ENCODE measurements at regions of chr22 and their contacts with region 1.

Region 1: DNA sequence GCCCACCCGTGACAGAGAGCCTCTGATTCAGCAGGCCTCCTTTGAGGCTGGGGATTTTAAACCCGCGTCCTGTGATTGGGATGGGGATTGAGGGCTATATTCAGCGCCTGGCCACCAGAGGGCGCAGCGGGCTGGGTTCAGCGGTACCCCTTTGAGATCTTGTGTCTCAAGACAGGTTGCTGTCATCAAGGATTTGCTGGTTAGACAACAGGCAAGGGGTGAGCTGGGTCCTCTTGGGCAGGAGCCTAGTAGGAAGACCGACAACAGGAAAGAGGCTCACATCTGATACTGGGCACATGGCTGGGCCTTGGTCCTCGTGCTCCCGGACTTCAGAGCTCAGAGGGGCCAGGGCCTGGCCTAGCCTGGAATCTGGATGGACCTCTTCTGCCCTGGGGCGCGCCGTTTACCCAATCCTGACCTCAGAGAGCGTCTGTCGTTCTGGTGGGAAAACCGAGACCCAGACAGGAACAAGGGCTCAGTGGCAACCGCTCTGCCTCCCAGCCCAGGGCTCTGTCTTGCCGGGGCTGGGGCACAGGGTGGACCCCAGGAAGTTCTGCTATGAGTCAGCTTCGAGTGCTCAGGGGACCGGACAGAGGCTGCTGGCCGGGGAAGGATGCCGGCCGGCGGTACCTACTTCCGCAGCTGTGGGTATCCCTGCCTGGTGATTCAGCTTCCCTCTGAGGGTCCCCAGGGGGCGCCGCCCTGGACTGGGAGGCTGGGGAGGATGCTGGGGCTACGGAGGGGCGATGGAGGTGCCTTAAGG is 929 bp upstream of the SLC35E4 start:
- DNase-seq: peak; percentile 95
- ATAC-seq: peak; percentile 77
- H3K4me3 Mint-ChIP-seq: peak overlapping the region; percentile 75
- H3K27ac Mint-ChIP-seq: peak overlapping the region; percentile 84
- H3K4me1 Mint-ChIP-seq: peaks cover 22% of the 10 kb centered on the region
- H3K27me3 Mint-ChIP-seq: no peaks in the 10 kb centered on the region

Region 2: DNA sequence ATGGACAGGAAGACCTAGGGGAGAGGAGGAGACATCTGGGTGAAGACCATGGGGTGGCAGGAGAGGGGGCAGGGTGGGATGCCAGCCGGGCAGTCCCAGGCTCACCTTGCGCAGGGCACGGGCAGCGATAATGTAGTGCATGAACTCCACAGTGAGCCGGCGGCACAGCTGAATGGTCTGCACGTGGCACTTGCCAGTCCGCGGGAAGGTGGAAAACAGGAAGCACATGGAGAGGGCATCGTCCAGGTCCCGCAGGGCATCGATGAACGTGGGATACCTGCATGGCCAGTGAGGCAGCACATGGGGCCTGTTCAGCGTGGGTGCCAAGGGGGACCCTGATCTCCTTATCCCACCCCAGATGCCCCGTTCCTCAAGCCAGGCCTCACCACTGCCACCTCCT is 50.2 kb before region 1 on chr22:
- CTCF ChIA-PET with region 1: no interaction called
- POLR2A ChIA-PET with region 1: no interaction called
- intact Hi-C with region 1: no loop called
- DNase-seq: no peak
- ATAC-seq: no peak
- H3K4me3 Mint-ChIP-seq: no peak overlapping the region
- H3K27ac Mint-ChIP-seq: no peak overlapping the region
- H3K4me1 Mint-ChIP-seq: no peaks in the 10 kb centered on the region
- H3K27me3 Mint-ChIP-seq: no peaks in the 10 kb centered on the region

Region 3: GRCh38 chr22:30600921-30601320 is 33.7 kb before region 1 on chr22:
- CTCF ChIA-PET with region 1: interaction called, 10 read pairs
- POLR2A ChIA-PET with region 1: no interaction called
- intact Hi-C with region 1: no loop called
- DNase-seq: no peak
- ATAC-seq: no peak
- H3K4me3 Mint-ChIP-seq: no peak overlapping the region
- H3K27ac Mint-ChIP-seq: no peak overlapping the region
- H3K4me1 Mint-ChIP-seq: peaks cover 6% of the 10 kb centered on the region
- H3K27me3 Mint-ChIP-seq: no peaks in the 10 kb centered on the region

Region 4: GRCh38 chr22:30667494-30668385 is 33.1 kb after region 1 on chr22 and contains the start of gene DUSP18:
- CTCF ChIA-PET with region 1: interaction called, 12 read pairs
- POLR2A ChIA-PET with region 1: interaction called, 3 read pairs
- intact Hi-C with region 1: loop called (anchors 1 kb)
- DNase-seq: peak; percentile 96
- ATAC-seq: peak; percentile 94
- H3K4me3 Mint-ChIP-seq: peak within 1 kb of the TSS; percentile 92
- H3K27ac Mint-ChIP-seq: peak within 1 kb of the TSS; percentile 69
- H3K4me1 Mint-ChIP-seq: peaks cover 19% of the 10 kb centered on the region
- H3K27me3 Mint-ChIP-seq: peaks cover 3% of the 10 kb centered on the region
- total RNA-seq, gene DUSP18: 7.8 to 8.5 TPM

Region 5: DNA sequence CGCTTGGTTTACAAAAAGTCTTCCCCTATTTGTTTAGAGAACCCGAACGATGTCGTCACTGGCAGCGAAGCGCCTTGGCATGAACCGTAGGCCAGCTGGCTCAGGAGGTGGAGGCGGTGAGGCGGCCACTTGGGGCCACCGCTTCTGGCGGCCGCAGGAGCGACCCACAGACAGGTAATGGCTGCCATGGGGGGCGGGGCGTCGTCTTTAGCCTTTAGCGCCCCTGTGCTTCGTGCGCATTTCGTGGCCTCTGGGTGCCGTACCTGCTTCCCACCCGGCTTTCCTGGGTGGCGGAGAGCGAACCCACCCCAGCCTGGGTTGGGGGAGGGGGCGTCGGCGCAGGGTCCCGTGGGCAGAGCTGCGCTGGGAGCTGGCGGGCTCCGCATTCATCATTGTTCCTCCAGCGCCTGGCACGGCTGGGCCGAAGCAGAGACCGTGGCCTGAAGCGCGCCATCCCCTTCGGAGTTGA is 59.6 kb after region 1 on chr22:
- CTCF ChIA-PET with region 1: interaction called, 6 read pairs
- POLR2A ChIA-PET with region 1: no interaction called
- intact Hi-C with region 1: loop called (anchors 1 kb)
- DNase-seq: peak; percentile 72
- ATAC-seq: peak; percentile 76
- H3K4me3 Mint-ChIP-seq: peak overlapping the region; percentile 79
- H3K27ac Mint-ChIP-seq: peak overlapping the region; percentile 74
- H3K4me1 Mint-ChIP-seq: peaks cover 5% of the 10 kb centered on the region
- H3K27me3 Mint-ChIP-seq: peaks cover 18% of the 10 kb centered on the region

Region 6: DNA sequence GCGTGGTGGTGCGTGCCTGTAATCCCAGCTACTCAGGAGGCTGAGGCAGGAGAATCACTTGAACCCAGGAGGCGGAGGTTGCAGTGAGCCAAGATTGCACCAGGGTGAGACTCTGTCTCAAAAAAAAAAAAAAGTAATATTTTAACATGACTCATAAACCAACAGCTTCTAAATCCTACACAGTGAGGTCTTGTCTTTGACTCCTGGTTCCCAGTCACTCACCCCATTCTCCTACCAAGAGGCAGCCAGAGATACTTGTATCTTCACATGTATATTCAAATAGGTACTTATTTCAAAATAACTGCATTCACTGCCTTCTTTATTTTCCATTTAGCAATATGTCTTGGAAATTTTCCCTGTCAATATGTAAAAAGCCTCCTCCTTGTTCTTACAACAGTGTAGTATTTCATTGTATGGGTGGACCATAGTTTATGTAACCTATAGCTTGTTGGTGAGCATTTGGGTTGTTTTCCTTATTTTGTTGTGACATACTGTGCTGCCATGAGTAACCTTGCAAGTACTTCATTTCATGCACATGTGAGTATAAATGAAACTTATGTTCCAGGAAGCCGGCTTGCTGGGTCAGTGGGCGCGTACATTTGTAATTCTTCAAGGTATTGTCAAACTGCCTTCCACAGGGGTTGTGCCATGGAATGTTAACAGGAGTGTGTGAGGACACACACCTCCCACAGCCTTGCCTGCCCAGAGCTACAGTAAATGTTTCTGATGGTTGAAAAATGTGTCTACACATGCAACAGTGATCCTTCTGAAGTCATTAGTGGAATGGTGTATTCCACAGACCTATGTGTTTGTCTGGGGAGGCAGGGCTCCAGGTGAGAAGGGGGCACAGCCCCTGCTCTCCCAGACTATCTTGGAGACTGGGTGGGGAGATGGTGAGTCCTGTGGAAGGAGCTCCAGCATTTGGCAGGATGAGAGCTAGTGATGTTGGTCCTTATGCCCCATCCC is 107.9 kb after region 1 on chr22:
- CTCF ChIA-PET with region 1: interaction called, 7 read pairs
- POLR2A ChIA-PET with region 1: interaction called, 7 read pairs
- intact Hi-C with region 1: loop called in 1 of 2 experiments (anchors 1 kb)
- DNase-seq: peak; percentile 69
- ATAC-seq: peak; percentile 61
- H3K4me3 Mint-ChIP-seq: peak overlapping the region; percentile 6
- H3K27ac Mint-ChIP-seq: peak overlapping the region; percentile 82
- H3K4me1 Mint-ChIP-seq: peaks cover 64% of the 10 kb centered on the region
- H3K27me3 Mint-ChIP-seq: peaks cover 7% of the 10 kb centered on the region

Region 7: DNA sequence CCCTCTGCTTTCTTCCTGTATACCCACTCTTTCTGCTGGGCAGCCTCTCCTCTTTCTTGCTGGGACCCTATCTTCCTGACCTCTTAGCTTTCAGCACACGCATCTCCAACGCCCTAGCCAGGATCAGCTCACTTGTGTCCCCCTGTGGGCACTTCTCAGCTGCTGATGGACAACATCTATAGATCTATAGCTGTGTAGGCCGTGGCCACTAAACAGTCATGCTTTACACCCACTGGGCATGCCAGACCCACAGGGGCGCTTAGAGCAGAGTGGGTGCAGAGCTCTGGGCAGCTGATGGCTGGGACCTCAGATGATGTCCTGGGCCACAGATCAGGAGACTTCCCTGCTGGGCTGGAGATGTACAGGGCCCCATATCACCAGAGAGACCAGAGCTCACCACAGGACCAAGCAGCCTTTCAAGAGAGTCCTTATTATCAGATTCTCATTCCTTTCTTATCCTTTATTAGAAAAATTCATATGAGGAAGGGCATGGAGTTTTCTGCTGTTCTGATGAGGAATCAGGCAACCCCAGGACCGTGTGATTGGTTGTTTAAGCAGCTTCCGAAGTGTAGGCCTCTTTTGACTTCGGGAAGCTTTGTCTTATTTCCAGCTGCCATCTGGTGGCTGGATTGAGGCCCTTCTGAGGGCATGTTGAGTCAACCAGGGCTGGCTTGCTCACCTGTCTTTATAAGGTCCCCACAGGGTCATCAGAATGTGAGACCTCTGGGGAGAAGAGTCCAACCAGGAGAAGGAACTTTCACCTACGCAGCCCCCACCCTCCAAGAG is 120.5 kb after region 1 on chr22:
- CTCF ChIA-PET with region 1: interaction called, 97 read pairs
- POLR2A ChIA-PET with region 1: interaction called, 8 read pairs
- intact Hi-C with region 1: loop called (anchors 1 kb)
- DNase-seq: peak; percentile 78
- ATAC-seq: peak; percentile 92
- H3K4me3 Mint-ChIP-seq: no peak overlapping the region
- H3K27ac Mint-ChIP-seq: no peak overlapping the region
- H3K4me1 Mint-ChIP-seq: no peaks in the 10 kb centered on the region
- H3K27me3 Mint-ChIP-seq: no peaks in the 10 kb centered on the region

Region 8: DNA sequence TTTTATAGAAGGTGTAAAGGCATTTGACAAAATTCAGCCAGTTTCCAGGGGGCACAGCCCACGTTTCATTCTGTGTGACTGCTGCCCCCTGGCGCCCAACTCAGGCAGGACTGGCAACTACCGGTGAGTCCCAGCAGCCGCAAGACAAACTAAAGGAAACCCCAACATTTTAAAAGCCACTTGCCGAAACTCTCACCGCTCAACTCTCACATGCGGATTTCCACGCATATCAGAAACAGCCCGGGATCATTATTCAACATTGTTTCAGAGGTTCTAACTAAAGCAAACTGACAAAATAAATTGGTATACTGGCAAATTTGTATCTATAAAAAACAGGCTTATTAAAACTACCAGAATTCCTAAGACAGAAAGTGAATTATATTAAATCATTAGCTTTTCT is 285.8 kb after region 1 on chr22:
- CTCF ChIA-PET with region 1: interaction called, 23 read pairs
- POLR2A ChIA-PET with region 1: no interaction called
- intact Hi-C with region 1: loop called (anchors 1 kb)
- DNase-seq: peak; percentile 91
- ATAC-seq: peak; percentile 83
- H3K4me3 Mint-ChIP-seq: peak overlapping the region; percentile 45
- H3K27ac Mint-ChIP-seq: no peak overlapping the region
- H3K4me1 Mint-ChIP-seq: peaks cover 9% of the 10 kb centered on the region
- H3K27me3 Mint-ChIP-seq: no peaks in the 10 kb centered on the region